Activated CD4-positive, alpha-beta T cell treated with anti-CD3 and anti-CD28 coated beads for 36 hours (primary cell): ENCODE measurements at regions of chr2 and their contacts with region 1.

Region 1: GRCh38 chr2:33475224-33476130 is 972 bp upstream of the RASGRP3 start:
- DNase-seq: peak; percentile 88
- ATAC-seq: peak; percentile 67
- H3K4me3 Mint-ChIP-seq: peak overlapping the region; percentile 83
- H3K27ac Mint-ChIP-seq: peak overlapping the region; percentile 98
- H3K4me1 Mint-ChIP-seq: peaks cover 32% of the 10 kb centered on the region
- H3K27me3 Mint-ChIP-seq: no peaks in the 10 kb centered on the region

Region 2: GRCh38 chr2:32063310-32064161 is 1411.9 kb before region 1 on chr2 and contains the start of gene SPAST:
- CTCF ChIA-PET with region 1: no interaction called
- POLR2A ChIA-PET with region 1: no interaction called
- intact Hi-C with region 1: loop called in 1 of 2 experiments (anchors 5 kb)
- DNase-seq: peak; percentile 98
- ATAC-seq: peak; percentile 95
- H3K4me3 Mint-ChIP-seq: peak within 1 kb of the TSS; percentile 97
- H3K27ac Mint-ChIP-seq: peak within 1 kb of the TSS; percentile 94
- H3K4me1 Mint-ChIP-seq: peaks cover 23% of the 10 kb centered on the region
- H3K27me3 Mint-ChIP-seq: no peaks in the 10 kb centered on the region
- total RNA-seq, gene SPAST: 16.8 to 19.5 TPM

Region 3: DNA sequence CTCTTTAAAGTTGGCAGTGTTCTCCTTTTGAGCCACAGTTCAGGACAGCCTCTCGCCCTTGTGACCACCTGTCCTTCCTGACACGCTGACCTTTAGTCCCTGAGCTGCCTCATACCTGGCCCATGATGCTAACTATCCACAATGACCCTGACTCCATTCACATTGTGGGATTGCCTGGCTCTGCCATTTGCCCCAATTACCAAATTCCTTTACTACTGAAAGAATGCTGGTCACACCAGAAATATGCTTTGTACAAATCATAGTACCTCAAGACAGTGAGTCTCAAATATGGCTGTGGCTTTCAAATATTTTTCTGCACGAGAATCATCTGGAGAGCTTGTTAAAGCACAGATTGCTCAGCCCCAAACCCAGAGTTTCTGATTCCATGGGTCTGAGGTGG is 474.5 kb before region 1 on chr2:
- CTCF ChIA-PET with region 1: no interaction called
- POLR2A ChIA-PET with region 1: no interaction called
- intact Hi-C with region 1: no loop called
- DNase-seq: no peak
- ATAC-seq: no peak
- H3K4me3 Mint-ChIP-seq: no peak overlapping the region
- H3K27ac Mint-ChIP-seq: no peak overlapping the region
- H3K4me1 Mint-ChIP-seq: no peaks in the 10 kb centered on the region
- H3K27me3 Mint-ChIP-seq: no peaks in the 10 kb centered on the region

Region 4: GRCh38 chr2:33258387-33258786 is 217.1 kb before region 1 on chr2:
- CTCF ChIA-PET with region 1: no interaction called
- POLR2A ChIA-PET with region 1: no interaction called
- intact Hi-C with region 1: no loop called
- DNase-seq: no peak
- ATAC-seq: no peak
- H3K4me3 Mint-ChIP-seq: no peak overlapping the region
- H3K27ac Mint-ChIP-seq: no peak overlapping the region
- H3K4me1 Mint-ChIP-seq: no peaks in the 10 kb centered on the region
- H3K27me3 Mint-ChIP-seq: peaks cover 4% of the 10 kb centered on the region

Region 5: GRCh38 chr2:33321236-33321771 is 154.2 kb before region 1 on chr2:
- CTCF ChIA-PET with region 1: no interaction called
- POLR2A ChIA-PET with region 1: no interaction called
- intact Hi-C with region 1: loop called (anchors 1 to 5 kb)
- DNase-seq: peak; percentile 63
- ATAC-seq: peak; percentile 88
- H3K4me3 Mint-ChIP-seq: peak overlapping the region; percentile 26
- H3K27ac Mint-ChIP-seq: peak overlapping the region; percentile 84
- H3K4me1 Mint-ChIP-seq: peaks cover 26% of the 10 kb centered on the region
- H3K27me3 Mint-ChIP-seq: peaks cover 5% of the 10 kb centered on the region

Region 6: GRCh38 chr2:33366473-33366872 is 109.0 kb before region 1 on chr2:
- CTCF ChIA-PET with region 1: no interaction called
- POLR2A ChIA-PET with region 1: no interaction called
- intact Hi-C with region 1: no loop called
- DNase-seq: no peak
- ATAC-seq: no peak
- H3K4me3 Mint-ChIP-seq: no peak overlapping the region
- H3K27ac Mint-ChIP-seq: no peak overlapping the region
- H3K4me1 Mint-ChIP-seq: no peaks in the 10 kb centered on the region
- H3K27me3 Mint-ChIP-seq: peaks cover 4% of the 10 kb centered on the region

Region 7: DNA sequence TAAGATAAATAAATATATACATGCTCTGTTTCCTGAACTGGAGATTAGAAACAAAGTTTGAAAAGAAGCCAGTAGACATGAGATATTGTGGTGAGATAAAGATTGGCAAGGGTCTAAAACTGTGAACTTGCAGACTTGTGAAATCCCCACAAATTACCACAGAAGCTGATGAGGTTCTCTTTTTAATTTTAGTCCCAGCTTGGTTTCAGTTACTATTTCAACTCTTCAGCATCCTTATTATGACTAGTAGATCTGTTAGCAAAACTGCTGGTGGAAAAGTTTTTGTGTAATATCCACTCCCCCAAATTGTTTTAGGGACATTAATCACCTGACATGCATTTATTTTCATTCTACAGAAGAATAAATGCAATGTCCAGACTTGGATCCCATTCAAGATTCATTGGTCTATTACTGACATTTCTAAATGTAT is 21.8 kb after region 1 on chr2:
- CTCF ChIA-PET with region 1: interaction called, 5 read pairs
- POLR2A ChIA-PET with region 1: no interaction called
- intact Hi-C with region 1: loop called (anchors 2 kb)
- DNase-seq: no peak
- ATAC-seq: peak; percentile 74
- H3K4me3 Mint-ChIP-seq: no peak overlapping the region
- H3K27ac Mint-ChIP-seq: no peak overlapping the region
- H3K4me1 Mint-ChIP-seq: peaks cover 39% of the 10 kb centered on the region
- H3K27me3 Mint-ChIP-seq: peaks cover 3% of the 10 kb centered on the region

Region 8: DNA sequence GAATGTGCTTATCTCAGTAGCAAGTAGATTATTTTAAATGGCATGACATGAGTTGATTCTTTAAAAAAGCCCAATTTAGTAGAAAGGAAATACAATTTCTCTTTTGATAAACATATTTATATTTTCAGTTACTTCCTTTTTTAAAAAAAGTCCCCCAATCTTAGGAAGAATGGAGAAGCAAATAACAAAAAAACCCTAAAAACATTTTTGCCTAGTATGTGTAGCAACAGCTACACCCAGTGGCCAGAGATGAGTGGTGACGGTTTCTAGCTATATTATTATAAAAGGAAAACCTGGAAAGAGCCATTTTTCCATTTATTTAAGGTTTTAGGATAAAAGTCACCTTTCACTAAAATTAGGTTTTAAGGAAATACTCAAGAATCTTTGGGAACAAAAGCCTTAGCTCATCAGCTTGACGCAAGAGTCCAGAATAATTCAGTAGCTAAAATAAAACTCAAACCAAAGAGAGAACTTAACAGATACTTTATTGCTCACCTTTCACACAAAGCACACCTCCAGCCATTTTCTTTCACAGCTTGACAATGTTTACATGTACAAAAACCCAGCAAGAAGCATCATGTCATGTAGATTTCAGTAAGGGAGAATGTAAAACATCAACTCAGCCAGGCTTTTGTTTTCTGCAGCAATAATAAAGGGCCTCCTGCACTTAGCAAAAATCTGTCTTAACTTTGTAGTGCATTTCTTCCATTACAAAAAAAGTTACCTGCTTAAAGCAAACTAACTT is 107.9 kb after region 1 on chr2:
- CTCF ChIA-PET with region 1: interaction called, 23 read pairs
- POLR2A ChIA-PET with region 1: no interaction called
- intact Hi-C with region 1: loop called (anchors 1 to 2 kb)
- DNase-seq: peak; percentile 32
- ATAC-seq: no peak
- H3K4me3 Mint-ChIP-seq: no peak overlapping the region
- H3K27ac Mint-ChIP-seq: no peak overlapping the region
- H3K4me1 Mint-ChIP-seq: peaks cover 14% of the 10 kb centered on the region
- H3K27me3 Mint-ChIP-seq: no peaks in the 10 kb centered on the region

Region 9: GRCh38 chr2:33873076-33873605 is 397.7 kb after region 1 on chr2:
- CTCF ChIA-PET with region 1: no interaction called
- POLR2A ChIA-PET with region 1: no interaction called
- intact Hi-C with region 1: no loop called
- DNase-seq: no peak
- ATAC-seq: no peak
- H3K4me3 Mint-ChIP-seq: no peak overlapping the region
- H3K27ac Mint-ChIP-seq: no peak overlapping the region
- H3K4me1 Mint-ChIP-seq: no peaks in the 10 kb centered on the region
- H3K27me3 Mint-ChIP-seq: no peaks in the 10 kb centered on the region